ENCODE measurements at regions of chr1 and their contacts with region 1.

Region 1: GRCh38 chr1:9004700-9005394 is 21.4 kb downstream of the SLC2A7 start:
- DNase-seq: peak; percentile 86
- H3K4me3 Mint-ChIP-seq: no peak overlapping the region
- H3K27ac Mint-ChIP-seq: peak overlapping the region; percentile 46
- H3K4me1 Mint-ChIP-seq: peaks cover 13% of the 10 kb centered on the region
- H3K27me3 Mint-ChIP-seq: peaks cover 8% of the 10 kb centered on the region

Region 2: DNA sequence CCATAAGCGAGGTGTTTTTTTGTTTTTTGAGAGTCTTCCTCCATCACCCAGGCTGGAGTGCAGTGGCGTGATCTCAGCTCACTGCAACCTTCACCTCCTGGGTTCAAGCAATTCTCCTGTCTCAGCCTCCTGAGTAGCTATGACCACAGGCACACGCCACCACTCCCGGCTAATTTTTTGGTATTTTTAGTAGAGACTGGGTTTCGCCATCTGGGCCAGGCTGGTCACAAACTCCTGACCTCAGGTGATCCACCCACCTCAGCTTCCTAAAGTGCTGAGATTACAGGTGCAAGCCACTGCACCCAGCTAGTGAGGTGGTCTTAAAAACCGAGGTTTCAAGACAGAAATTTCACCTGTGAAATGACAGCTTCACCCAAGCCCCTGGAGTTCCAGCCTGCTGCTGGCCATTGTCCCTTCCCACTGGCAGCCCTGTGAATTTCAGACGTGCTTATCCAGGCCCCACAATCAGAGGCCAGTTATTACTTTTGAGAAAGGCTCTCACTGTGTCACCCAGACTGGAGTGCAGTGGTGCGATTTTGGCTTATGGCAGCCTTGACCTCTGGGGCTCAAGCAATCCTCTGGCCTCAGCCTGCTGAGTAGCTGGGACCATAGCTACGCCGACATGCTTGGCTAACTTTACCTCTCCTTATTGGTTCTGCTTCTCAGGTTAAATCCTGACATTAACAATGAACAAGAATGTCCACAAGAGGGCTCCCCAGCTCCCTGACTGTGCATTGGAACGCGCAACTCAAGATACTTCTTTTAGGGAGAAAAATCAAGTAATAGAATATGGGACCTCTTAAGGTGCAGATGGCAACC is 145.8 kb before region 1 on chr1:
- CTCF ChIA-PET with region 1: interaction called, 13 read pairs
- POLR2A ChIA-PET with region 1: interaction called, 3 read pairs
- DNase-seq: peak; percentile 71
- H3K4me3 Mint-ChIP-seq: no peak overlapping the region
- H3K27ac Mint-ChIP-seq: peak overlapping the region; percentile 82
- H3K4me1 Mint-ChIP-seq: peaks cover 44% of the 10 kb centered on the region
- H3K27me3 Mint-ChIP-seq: no peaks in the 10 kb centered on the region

Region 3: DNA sequence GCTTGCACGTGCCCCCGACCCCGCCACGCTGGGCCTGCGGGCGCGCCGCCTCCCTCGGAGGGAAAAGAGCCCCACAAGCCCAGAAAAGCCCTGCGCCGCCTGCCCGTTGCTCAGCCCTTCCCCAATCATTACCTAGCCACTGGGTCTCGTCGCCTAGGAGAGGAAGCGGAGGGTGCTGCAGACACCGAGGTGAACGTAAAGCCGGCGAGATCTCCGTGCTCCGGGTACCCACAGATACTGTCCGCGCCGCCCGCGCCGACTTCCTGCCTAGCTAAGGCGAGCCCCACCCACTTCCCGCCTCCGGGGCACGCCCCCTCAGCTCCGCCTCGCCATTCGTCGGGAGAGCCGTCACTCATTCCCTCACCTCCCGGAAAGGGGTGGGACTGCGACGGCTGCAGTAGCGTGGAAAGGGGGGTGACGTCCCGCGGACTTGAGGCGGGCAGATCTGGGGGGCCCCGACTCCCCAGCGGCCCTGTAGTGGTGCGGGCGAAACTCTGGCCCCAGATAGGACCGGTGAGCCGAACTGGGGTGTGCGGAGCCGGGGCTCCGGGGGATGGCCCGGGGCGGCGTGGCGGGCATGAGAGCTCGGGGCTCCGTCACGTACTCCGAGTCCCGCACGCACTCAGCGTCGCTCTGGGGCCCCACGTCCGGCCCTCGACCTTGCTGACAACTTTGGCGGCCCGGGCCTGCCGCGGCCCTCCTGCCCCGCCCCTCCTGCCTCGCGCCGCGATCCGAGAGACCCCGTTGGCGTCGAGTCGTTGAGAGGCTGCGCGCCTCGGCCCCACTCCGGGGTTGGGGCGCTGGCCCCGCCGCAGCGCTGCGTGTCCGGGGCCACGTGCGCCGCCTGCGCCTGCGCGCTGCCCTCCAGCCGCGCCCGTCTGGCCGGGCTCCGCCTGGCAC is 126.1 kb before region 1 on chr1 and contains the start of gene ENO1:
- CTCF ChIA-PET with region 1: interaction called, 12 read pairs
- POLR2A ChIA-PET with region 1: no interaction called
- DNase-seq: peak; percentile 97
- H3K4me3 Mint-ChIP-seq: peak within 1 kb of the TSS; percentile 96
- H3K27ac Mint-ChIP-seq: peak within 1 kb of the TSS; percentile 98
- H3K4me1 Mint-ChIP-seq: peaks cover 44% of the 10 kb centered on the region
- H3K27me3 Mint-ChIP-seq: no peaks in the 10 kb centered on the region
- total RNA-seq, gene ENO1: 1,608 to 1,874 TPM

Region 4: GRCh38 chr1:8910914-8911313 is 93.9 kb before region 1 on chr1:
- CTCF ChIA-PET with region 1: interaction called, 99 read pairs
- POLR2A ChIA-PET with region 1: no interaction called
- DNase-seq: no peak
- H3K4me3 Mint-ChIP-seq: no peak overlapping the region
- H3K27ac Mint-ChIP-seq: no peak overlapping the region
- H3K4me1 Mint-ChIP-seq: peaks cover 19% of the 10 kb centered on the region
- H3K27me3 Mint-ChIP-seq: peaks cover 10% of the 10 kb centered on the region

Region 5: DNA sequence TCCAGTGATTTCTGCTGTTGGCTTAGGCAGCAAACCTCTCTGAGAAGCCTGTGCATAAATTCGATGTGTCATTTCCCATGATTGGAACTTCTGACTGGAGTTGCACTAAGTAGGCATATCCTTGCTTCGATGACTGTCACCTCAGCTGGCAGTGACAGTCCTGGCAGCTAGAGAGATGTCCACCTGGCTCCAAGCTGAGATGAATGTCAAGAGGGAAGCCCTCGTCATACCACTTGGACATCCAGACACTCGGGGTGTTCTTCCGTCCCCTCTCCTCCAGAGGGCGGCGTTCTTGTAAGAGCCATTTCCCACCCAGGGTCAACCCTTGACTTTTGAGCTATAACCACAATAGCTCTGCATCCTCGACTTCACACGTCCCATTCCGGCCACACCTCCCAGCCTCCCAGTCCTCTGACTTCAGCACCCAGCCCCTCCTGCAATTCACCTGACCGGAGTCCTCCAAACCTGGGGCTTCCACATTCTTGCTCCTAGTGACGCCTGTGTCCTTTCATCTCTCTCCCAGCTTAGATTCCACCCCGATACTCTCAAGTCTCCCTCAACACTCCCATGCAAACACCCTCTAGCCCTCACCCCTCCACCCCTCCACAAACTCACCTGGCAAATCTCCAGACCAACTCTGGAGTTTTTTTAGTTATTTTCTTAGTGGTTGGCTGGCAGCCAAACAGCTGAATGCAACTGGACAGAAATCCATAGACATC is 41.9 kb before region 1 on chr1:
- CTCF ChIA-PET with region 1: interaction called, 12 read pairs
- POLR2A ChIA-PET with region 1: no interaction called
- DNase-seq: peak; percentile 31
- H3K4me3 Mint-ChIP-seq: no peak overlapping the region
- H3K27ac Mint-ChIP-seq: peak overlapping the region; percentile 56
- H3K4me1 Mint-ChIP-seq: peaks cover 78% of the 10 kb centered on the region
- H3K27me3 Mint-ChIP-seq: no peaks in the 10 kb centered on the region

Region 6: GRCh38 chr1:8987881-8988617 is 16.8 kb before region 1 on chr1:
- CTCF ChIA-PET with region 1: interaction called, 35 read pairs
- POLR2A ChIA-PET with region 1: no interaction called
- DNase-seq: peak; percentile 71
- H3K4me3 Mint-ChIP-seq: peak overlapping the region; percentile 20
- H3K27ac Mint-ChIP-seq: peak overlapping the region; percentile 93
- H3K4me1 Mint-ChIP-seq: peaks cover 58% of the 10 kb centered on the region
- H3K27me3 Mint-ChIP-seq: no peaks in the 10 kb centered on the region

Region 7: DNA sequence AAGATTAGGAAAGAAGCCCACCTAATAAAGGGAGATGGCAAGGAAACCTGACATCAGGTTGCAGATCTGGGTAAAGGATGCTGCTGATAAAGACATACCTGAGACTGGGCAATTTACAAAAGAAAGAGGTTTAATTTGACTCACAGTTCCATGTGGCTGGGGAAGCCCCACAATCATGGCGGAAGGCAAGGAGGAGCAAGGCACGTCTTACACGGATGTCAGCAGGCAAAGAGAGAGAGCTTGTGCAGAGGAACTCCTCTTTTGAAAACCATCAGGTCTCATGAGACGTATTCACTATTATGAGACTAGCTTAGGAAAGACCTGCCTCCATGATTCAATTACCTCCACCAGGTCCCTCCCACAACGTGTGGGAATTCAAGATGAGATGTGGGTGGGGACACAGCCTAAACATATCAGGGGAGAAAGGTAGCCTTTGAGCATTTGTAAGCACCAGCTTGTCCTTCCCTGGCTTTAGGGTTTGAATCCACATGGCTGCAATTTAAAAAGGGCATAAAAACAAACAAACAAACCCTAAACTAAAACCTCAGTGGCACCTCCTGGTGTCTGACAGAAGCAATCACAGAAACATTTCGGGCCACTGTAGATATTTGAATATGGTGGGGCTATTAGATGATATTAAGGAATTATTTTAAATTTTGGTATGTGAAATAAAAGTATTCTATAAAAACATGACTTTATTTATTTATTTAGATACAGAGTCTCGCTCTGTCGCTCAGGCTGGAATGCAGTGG is 11.7 kb before region 1 on chr1:
- CTCF ChIA-PET with region 1: interaction called, 35 read pairs
- POLR2A ChIA-PET with region 1: no interaction called
- DNase-seq: no peak
- H3K4me3 Mint-ChIP-seq: no peak overlapping the region
- H3K27ac Mint-ChIP-seq: no peak overlapping the region
- H3K4me1 Mint-ChIP-seq: peaks cover 21% of the 10 kb centered on the region
- H3K27me3 Mint-ChIP-seq: peaks cover 2% of the 10 kb centered on the region